Thyroid gland (tissue), 4 donors: ENCODE measurements at regions of chr10 and their contacts with region 1.

Region 1: GRCh38 chr10:11515596-11516430 is 95.6 kb downstream of the USP6NL start:
- DNase-seq: peak; percentile 48 to 50
- H3K4me3 ChIP-seq: no peak overlapping the region
- H3K27ac ChIP-seq: no peak overlapping the region
- H3K4me1 ChIP-seq: no peaks in the 10 kb centered on the region
- H3K27me3 ChIP-seq: no peaks in the 10 kb centered on the region
- CTCF ChIP-seq: peak; percentile 34 to 82 (median 72)
- POLR2A ChIP-seq: no peak

Region 2: DNA sequence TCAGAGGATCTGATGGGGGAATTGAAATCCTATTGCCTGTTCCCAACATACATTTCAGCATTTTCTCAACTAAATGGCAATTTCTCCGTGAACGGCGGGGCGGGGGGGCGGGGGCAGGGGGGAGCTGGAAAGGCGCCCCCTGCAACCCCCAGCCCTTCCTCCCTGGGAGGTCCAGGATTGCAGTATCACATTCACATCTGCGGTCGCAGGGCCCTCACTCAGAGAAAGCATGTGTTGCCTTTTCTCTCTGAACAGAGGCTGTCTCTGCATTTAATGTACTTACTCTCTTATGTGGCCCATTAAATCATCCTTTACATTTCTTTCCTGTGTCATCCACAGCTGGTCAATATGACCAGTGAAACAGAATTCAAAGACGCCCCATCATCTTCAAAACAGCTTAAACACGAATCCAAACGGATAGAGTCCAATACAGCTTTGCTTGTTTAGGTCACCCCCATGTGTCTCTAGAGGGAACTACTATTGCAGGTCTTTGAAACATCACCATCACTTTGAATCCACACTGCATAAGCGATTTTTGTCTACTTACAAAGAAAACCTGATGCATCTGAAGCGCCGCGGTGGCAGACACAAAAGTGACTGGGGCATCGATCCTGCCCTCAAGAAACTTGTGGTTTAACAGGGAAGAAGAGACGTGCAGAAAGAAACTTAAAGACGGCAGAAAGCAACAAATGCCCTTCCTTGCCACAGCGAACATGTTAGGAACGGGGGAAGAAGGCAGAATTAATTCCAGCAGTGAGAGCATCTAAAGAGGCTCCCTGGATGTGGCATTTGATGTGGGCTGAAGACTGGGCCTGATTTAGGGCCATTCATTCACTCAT is 209.3 kb after region 1 on chr10:
- intact Hi-C with region 1: loop called (anchors 5 kb)
- DNase-seq: no peak
- H3K4me3 ChIP-seq: no peak overlapping the region
- H3K27ac ChIP-seq: no peak overlapping the region
- H3K4me1 ChIP-seq: no peaks in the 10 kb centered on the region
- H3K27me3 ChIP-seq: no peaks in the 10 kb centered on the region
- CTCF ChIP-seq: peak; percentile 23 to 52 (median 50)
- POLR2A ChIP-seq: no peak

Region 3: DNA sequence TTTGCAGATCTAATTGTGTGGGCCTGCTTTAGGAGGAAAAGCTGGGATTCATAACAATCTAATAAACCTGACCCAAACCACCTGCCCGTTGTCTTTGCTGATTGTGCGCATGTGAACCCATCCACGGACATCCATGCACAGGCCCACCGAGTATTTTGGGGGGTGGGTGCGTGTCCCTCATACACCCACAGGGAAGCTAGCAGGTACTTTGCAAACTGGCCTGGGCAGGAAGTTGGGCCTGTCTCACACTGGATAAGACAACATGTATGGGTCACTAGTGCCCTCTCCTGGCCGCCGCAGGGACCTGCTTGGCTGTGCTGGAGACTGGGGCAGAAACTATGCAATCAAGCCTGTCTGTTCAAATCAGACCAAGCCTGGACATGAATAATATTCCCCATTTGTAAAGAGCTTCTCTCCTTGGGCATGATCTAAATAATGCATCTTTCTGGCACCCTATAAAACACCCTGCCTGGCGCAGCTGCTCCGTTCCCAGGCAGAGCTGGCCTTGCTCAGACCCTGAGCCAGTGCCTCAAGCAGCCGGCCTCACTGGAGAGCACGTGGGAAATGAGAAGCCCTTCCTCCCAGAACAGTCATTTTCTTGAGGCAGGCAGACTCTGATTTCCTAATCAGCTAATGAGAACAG is 242.1 kb after region 1 on chr10:
- intact Hi-C with region 1: loop called (anchors 10 kb)
- DNase-seq: peak; percentile 86 to 92
- H3K4me3 ChIP-seq: no peak overlapping the region
- H3K27ac ChIP-seq: peak overlapping the region; percentile 39 to 80 (median 41)
- H3K4me1 ChIP-seq: peaks cover 6 to 15% of the 10 kb centered on the region in 2 donors
- H3K27me3 ChIP-seq: no peaks in the 10 kb centered on the region
- CTCF ChIP-seq: peak; percentile 61 to 95 (median 88)
- POLR2A ChIP-seq: no peak

Region 4: GRCh38 chr10:11934262-11934661 is 418.4 kb after region 1 on chr10:
- intact Hi-C with region 1: no loop called
- DNase-seq: no peak
- H3K4me3 ChIP-seq: no peak overlapping the region
- H3K27ac ChIP-seq: peak overlapping the region in 2 of 3 donors; percentile 5 to 9
- H3K4me1 ChIP-seq: no peaks in the 10 kb centered on the region
- H3K27me3 ChIP-seq: no peaks in the 10 kb centered on the region
- CTCF ChIP-seq: no peak
- POLR2A ChIP-seq: no peak